GM18951 (cell line): ENCODE measurements at regions of chr13 and their contacts with region 1.

Region 1: DNA sequence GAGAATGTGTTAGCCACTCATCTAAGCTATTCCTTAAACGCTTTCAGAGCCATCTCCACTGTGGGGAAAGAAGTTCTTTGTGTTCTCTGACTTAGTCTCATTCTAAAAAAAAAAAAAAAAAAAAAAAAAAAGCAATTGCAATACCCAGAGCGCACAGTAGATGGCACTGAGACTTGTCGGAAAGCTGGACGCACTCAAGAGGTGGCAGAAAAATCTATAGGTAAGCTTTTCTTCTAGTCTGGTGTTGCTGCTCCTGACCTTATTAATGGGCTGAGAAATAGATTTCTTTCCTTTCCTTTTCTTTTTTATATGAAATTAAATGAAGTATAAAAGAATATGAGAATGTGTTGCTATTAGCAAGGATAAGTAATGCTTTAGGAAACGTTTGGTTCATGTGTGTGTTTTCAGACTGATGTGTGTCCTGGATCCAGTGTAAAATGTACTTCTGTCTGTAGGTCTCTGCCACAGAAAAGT is 4.7 kb upstream of the GJB2 start:
- POLR2A ChIP-seq: no peak

Region 2: DNA sequence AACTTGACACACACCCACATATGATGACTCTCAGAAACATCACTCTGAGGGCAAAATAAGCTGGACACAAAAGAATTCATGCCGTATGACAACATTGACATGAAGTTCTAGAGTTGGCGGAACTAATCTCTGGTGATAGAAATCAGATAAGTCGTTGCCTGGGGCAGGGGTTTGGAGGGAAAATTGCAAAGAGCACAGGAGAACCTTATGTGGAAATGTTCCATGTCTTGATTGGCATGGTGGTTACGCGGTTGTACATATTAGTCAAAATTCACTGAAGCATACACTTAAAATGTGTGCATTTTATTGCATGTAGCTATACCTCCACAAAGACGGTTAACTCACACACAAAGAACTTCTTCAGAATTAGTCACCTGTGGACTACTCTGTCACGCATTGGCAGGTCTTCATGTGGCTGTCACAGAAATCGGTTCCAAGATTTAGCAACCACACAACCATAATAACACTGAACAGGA is 172.5 kb after region 1 on chr13:
- in situ Hi-C with region 1: loop called (anchors 10 kb)
- POLR2A ChIP-seq: no peak

Region 3: GRCh38 chr13:20773194-20774080 is 576.0 kb after region 1 on chr13 and contains the start of gene EEF1AKMT1:
- in situ Hi-C with region 1: no loop called
- POLR2A ChIP-seq: peak; percentile 96